ENCODE measurements at regions of chr20 and their contacts with region 1.

Region 1: DNA sequence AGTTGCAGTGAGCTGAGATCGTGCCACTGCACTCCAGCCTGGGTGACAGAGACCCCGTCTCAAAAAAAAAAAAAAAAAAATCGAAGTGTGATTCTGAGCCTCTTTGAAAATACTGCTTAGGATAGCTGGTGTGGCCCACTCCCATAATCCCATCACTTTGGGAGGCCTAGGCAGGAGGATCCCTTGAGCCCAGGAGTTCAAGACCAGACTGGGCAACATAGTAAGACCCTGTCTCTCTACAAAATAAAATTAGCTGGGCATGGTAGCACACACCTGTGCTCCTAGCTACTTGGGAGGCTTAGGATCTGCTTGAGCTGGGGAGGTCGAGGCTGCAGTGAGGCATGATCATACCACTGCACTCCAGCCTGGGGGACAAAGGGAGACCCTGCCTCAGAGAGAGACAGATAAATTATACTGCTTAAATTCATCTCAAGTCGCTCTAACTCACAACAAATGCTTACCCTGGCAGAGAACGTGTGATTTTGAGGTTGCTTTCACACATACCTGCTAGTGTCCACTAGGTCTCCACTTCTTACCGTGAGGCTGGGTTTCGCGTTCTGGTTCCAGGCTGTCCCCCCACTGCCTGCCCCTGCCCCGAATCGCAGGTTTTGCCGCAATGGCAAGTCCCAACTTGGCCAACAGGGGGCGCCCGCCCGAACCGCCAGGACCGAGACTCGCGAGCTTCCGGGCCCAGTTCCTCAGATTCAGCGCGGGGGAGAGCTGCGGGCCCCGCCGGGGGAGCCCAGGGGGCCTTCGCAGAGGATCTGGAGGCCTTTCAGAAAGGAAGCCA is 12.3 kb upstream of the TMC2 start:
- DNase-seq: peak; percentile 25
- ATAC-seq: peak; percentile 89
- H3K4me3 ChIP-seq: peak overlapping the region; percentile 87
- H3K27ac ChIP-seq: peak overlapping the region; percentile 43; the same call in 1 of the 2 replicates
- H3K4me1 ChIP-seq: 0 out of 2 replicates have a peak, but pooled peaks cover 3% of the 10 kb centered on the region
- H3K27me3 ChIP-seq: no peaks in the 10 kb centered on the region
- CTCF ChIP-seq: peak; percentile 88 to 95 (median 91)
- EP300 ChIP-seq: no peak
- POLR2A ChIP-seq: peak; percentile 84
- RAD21 ChIP-seq: peak; percentile 31; the same call in 1 of the 2 replicates

Region 2: DNA sequence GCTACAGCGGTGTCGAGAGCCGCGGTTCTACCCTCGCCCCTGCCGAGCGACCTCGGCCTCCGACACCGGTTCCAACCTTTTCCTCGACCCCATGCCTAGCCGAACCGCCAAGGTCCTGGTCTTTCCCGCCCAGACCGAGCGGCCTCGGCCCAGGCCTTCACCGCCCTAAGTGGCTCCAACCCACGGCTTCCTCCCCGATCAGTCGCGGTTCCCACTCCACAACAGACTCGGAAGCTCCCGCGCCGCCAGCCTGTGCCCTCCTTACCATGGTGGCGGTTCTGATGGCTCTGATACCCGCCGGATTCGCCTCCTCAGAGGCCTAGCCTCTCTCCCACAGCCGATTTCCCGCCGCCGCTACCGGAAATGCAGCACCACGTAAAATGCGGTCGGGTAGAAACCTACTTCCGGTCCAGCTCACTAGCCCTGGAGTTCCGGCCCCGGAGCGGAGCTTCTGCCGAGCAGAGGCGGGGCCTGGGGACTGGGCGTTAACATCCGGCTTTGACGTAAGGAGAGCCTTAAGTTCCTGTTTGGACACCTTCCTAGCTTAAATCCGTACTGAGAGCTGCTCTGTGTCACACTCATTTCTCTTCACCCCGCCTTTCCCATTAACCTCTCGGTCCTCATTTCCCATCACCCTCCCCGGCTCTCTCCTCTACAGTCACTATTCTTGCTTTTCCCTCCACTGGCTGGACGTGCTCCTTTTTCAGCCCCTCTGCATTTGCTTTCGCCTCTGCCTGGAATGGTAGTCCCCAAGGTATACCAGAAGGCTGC is 53.5 kb before region 1 on chr20 and contains the start of gene SNRPB:
- CTCF ChIA-PET with region 1: interaction called, 49 read pairs
- POLR2A ChIA-PET with region 1: interaction called, 7 read pairs
- RAD21 ChIA-PET with region 1: no interaction called
- SMC1A ChIA-PET with region 1: interaction called, 5 read pairs
- in situ Hi-C with region 1: no loop called
- intact Hi-C with region 1: no loop called
- DNase-seq: peak; percentile 94
- ATAC-seq: peak; percentile 97
- H3K4me3 ChIP-seq: peak within 1 kb of the TSS; percentile 91
- H3K27ac ChIP-seq: peak within 1 kb of the TSS; percentile 94
- H3K4me1 ChIP-seq: no peaks in the 10 kb centered on the region
- H3K27me3 ChIP-seq: no peaks in the 10 kb centered on the region
- CTCF ChIP-seq: no peak
- EP300 ChIP-seq: no peak
- POLR2A ChIP-seq: peak; percentile 95
- RAD21 ChIP-seq: no peak
- polyA plus RNA-seq, gene SNRPB: 15.0 to 108 TPM

Region 3: GRCh38 chr20:2508631-2509467 is 15.3 kb before region 1 on chr20 and contains the start of gene ZNF343:
- CTCF ChIA-PET with region 1: interaction called, 86 read pairs
- POLR2A ChIA-PET with region 1: interaction called, 6 read pairs
- RAD21 ChIA-PET with region 1: no interaction called
- SMC1A ChIA-PET with region 1: interaction called, 11 read pairs
- in situ Hi-C with region 1: no loop called
- intact Hi-C with region 1: no loop called
- DNase-seq: peak; percentile 58
- ATAC-seq: peak; percentile 97
- H3K4me3 ChIP-seq: peak within 1 kb of the TSS; percentile 86
- H3K27ac ChIP-seq: peak within 1 kb of the TSS; percentile 79
- H3K4me1 ChIP-seq: peaks cover 6% of the 10 kb centered on the region; the same call in 1 of the 2 replicates
- H3K27me3 ChIP-seq: 0 out of 4 replicates have a peak, but pooled peaks cover 0 to 1% of the 10 kb centered on the region in 2 experiments
- CTCF ChIP-seq: no peak
- EP300 ChIP-seq: 0 out of 4 replicates have a peak, but pooled peaks of 1 of the 2 experiments have one; percentile 20
- POLR2A ChIP-seq: peak; percentile 82
- RAD21 ChIP-seq: no peak
- polyA plus RNA-seq, gene ZNF343: 1.3 to 3.3 TPM

Region 4: GRCh38 chr20:2559651-2560050 is 35.5 kb after region 1 on chr20:
- CTCF ChIA-PET with region 1: no interaction called
- POLR2A ChIA-PET with region 1: no interaction called
- RAD21 ChIA-PET with region 1: no interaction called
- SMC1A ChIA-PET with region 1: no interaction called
- in situ Hi-C with region 1: no loop called
- intact Hi-C with region 1: no loop called
- DNase-seq: no peak
- ATAC-seq: no peak
- H3K4me3 ChIP-seq: no peak overlapping the region
- H3K27ac ChIP-seq: no peak overlapping the region
- H3K4me1 ChIP-seq: no peaks in the 10 kb centered on the region
- H3K27me3 ChIP-seq: peaks cover 9 to 12% of the 10 kb centered on the region in 2 experiments
- CTCF ChIP-seq: no peak
- EP300 ChIP-seq: no peak
- POLR2A ChIP-seq: no peak
- RAD21 ChIP-seq: no peak

Region 5: DNA sequence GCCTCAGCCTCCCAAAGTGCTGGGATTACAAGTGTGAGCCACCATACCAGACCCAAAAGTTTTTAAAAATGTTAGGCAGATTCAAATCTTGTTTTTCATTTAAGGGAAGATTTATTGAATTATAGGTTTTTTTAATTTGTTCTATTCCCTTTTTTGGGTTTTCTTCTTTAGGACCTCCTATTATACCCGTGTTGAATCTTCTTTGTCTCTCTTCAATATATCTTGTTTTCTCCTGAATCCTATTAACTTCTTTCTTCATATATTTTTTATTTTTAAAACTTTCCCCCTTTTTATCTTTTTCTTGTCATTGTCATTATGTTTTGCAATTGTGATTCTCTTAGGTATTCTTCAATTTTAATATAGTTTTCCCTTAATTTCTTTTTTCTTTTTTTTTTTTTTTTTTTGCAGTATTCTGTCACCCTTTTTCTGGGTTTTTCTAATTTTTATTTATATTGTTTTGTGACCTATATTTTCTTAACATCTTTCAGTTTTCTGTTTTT is 82.4 kb after region 1 on chr20:
- CTCF ChIA-PET with region 1: no interaction called
- POLR2A ChIA-PET with region 1: no interaction called
- RAD21 ChIA-PET with region 1: no interaction called
- SMC1A ChIA-PET with region 1: no interaction called
- in situ Hi-C with region 1: no loop called
- intact Hi-C with region 1: no loop called
- DNase-seq: no peak
- ATAC-seq: no peak
- H3K4me3 ChIP-seq: no peak overlapping the region
- H3K27ac ChIP-seq: no peak overlapping the region
- H3K4me1 ChIP-seq: no peaks in the 10 kb centered on the region
- H3K27me3 ChIP-seq: peaks cover 0 to 2% of the 10 kb centered on the region in 2 experiments; a peak in 1 of 4 replicates
- CTCF ChIP-seq: no peak
- EP300 ChIP-seq: no peak
- POLR2A ChIP-seq: no peak
- RAD21 ChIP-seq: no peak

Region 6: GRCh38 chr20:2643708-2644107 is 119.6 kb after region 1 on chr20:
- CTCF ChIA-PET with region 1: interaction called, 13 read pairs
- POLR2A ChIA-PET with region 1: no interaction called
- RAD21 ChIA-PET with region 1: interaction called, 8 read pairs
- SMC1A ChIA-PET with region 1: interaction called, 5 read pairs
- in situ Hi-C with region 1: no loop called
- intact Hi-C with region 1: no loop called
- DNase-seq: no peak
- ATAC-seq: no peak
- H3K4me3 ChIP-seq: no peak overlapping the region
- H3K27ac ChIP-seq: no peak overlapping the region
- H3K4me1 ChIP-seq: no peaks in the 10 kb centered on the region
- H3K27me3 ChIP-seq: no peaks in the 10 kb centered on the region
- CTCF ChIP-seq: no peak
- EP300 ChIP-seq: no peak
- POLR2A ChIP-seq: no peak
- RAD21 ChIP-seq: no peak

Measured in GM12878 (cell line).